ENCODE measurements at regions of chr15 and their contacts with region 1.

Region 1: GRCh38 chr15:38699633-38700230 is 135.1 kb upstream of the RASGRP1 start:
- DNase-seq: peak; percentile 58
- H3K4me3 ChIP-seq: no peak overlapping the region
- H3K27ac ChIP-seq: no peak overlapping the region
- H3K4me1 ChIP-seq: peaks cover 3% of the 10 kb centered on the region
- H3K27me3 ChIP-seq: no peaks in the 10 kb centered on the region
- CTCF ChIP-seq: peak; percentile 59 to 75 (median 67)
- POLR2A ChIP-seq: no peak

Region 2: DNA sequence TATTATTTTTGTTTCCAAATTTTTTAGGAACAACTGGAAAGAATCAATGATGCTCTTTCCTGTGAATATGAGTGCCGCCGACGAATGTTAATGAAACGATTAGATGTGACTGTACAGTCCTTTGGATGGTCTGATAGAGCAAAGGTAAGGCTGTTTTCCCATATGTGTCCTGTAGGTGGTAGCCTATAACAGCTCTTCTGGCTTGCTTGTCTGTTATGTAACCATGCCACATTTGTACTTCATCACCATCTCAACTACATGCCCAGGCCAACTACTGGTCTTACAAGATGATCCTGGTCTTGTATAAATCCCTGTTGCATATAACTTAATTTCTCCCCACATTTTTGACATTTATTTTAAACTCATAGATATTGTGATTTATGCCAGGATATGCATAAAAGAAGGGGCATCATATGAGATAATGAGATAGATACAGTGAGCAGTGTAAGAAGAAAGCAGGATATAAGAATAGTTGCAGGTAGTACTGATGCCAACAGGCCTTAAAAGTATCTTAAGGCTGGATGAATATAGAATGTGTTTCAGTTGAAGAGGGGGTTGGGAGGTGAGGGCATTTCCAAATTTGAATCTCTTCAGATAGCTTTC is 225.5 kb before region 1 on chr15:
- intact Hi-C with region 1: loop called (anchors 10 kb)
- DNase-seq: peak; percentile 24
- H3K4me3 ChIP-seq: no peak overlapping the region
- H3K27ac ChIP-seq: no peak overlapping the region
- H3K4me1 ChIP-seq: no peaks in the 10 kb centered on the region
- H3K27me3 ChIP-seq: no peaks in the 10 kb centered on the region
- CTCF ChIP-seq: peak in 3 of 4 experiments; percentile 30 to 74 (median 59)
- POLR2A ChIP-seq: no peak